ENCODE measurements at regions of chr10 and their contacts with region 1.

Region 1: DNA sequence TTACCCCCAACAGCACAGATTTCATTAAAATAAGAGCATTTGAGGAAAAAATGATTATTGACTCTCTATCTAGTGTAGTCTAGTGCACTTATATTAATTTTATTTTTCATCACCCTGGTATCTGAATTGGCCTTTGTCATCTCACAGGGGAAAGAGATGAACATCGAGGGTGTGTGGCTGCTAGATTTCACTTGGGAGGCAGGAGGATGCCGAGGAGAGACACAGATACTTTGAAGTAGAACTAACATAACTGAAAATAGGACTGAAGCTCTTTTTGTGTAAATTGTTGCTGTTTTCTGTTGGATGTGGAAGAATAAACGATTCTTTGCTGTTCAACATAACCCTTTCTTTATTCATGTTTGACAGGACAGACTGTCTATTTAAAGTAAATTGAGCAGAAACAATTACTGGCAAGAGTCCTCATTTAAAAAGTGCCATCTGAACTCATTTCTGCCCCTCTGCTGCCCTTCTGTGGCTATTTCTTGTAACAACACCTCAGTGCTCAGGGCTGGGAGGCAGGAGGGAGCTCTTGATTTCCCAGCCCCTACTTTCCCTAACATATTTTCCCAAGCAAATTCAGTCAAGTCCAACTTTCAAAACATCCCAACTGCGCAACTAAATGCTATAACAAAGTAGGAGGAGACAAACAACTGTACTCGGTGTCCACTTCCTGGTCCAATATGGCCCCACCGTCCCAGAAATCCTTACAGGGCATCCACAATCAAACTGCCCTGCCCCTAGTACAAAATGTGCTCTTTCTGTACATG is 15.6 kb downstream of the LYZL1 start:
- H3K4me3 ChIP-seq: no peak overlapping the region
- H3K27ac ChIP-seq: no peak overlapping the region; the same call in 1 of the 2 replicates
- H3K4me1 ChIP-seq: no peaks in the 10 kb centered on the region; the same call in 1 of the 2 replicates
- CTCF ChIP-seq: peak; percentile 82

Region 2: DNA sequence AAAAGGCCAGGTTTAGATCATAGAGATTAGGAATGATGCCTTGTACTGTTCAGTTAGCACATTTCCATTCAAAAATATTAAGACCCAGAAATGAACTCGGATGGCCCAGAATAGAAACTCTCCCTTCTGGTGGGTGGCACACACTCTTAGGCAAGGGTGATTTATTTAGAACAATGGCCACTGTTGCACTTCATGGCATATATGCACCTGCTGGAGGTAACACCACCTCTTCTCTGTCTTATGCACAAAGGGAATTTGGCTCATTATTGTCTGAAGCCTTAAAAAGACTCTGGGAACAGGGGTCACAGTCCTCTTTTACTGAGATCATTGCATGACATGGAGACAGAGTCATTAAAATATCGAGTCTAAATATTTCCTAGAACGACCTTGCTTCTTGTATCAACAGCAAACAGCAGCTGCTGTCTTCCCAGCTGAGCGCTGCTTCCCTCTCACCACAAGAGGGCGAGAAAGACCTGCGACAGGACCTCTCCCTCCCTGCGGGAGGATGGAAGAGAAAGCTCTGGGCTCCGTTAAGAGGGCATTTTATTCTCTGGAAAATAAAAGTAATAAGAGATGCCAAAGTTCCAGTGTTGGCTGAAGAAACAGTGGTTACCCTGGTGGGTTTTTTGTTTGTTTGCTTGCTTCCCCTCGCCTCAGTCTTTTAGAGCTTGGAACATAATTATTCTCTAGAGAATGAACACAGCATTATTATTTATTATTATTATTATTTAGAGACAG is 640.7 kb before region 1 on chr10:
- CTCF ChIA-PET with region 1: interaction called, 20 read pairs
- POLR2A ChIA-PET with region 1: no interaction called
- H3K4me3 ChIP-seq: no peak overlapping the region
- H3K27ac ChIP-seq: no peak overlapping the region
- H3K4me1 ChIP-seq: 0 out of 2 replicates have a peak, but pooled peaks cover 6% of the 10 kb centered on the region
- CTCF ChIP-seq: peak; percentile 84

Region 3: DNA sequence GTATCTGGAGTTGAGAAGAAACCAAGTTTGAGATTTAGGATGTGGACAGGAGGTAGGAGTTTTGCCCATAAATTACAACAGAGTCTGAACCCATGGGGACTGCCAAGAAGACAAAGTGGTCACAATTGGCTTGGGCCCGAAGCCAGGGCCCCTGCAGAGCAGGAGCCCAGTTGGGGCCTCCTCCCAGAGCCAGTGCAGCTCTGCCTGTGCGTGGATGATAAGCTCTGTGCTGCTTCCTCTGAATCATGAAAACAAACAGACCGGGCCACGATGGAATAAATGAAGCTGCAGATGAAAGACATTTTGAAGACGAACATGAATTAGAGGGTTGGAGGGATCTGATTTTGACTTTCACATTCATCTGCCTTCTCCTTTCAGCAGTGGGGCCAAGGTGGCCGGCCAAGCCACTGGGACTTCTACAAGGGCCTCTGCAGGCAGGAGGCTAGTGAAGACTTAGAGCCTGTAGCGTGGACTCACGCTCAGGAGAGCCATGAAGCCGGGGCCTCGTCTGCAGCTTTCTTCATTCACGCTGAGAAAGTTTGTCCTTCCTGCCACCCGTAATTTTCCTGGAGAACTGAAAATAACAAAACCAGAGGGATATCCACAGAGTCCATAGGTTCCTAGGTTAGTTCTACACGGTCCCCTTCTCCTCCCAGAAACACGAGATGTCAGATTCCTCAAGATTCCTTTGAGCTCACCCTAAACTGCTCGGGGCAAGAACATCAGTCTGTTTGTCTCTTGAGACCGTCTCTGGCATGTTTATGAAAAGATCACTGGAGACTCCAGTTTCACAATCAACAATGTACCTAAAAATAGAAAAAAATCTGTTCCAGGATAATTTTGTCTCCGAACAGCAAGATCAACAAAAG is 172.3 kb before region 1 on chr10:
- CTCF ChIA-PET with region 1: interaction called, 15 read pairs
- POLR2A ChIA-PET with region 1: no interaction called
- H3K4me3 ChIP-seq: no peak overlapping the region
- H3K27ac ChIP-seq: peak overlapping the region; percentile 61
- H3K4me1 ChIP-seq: peaks cover 7% of the 10 kb centered on the region; the same call in 1 of the 2 replicates
- CTCF ChIP-seq: no peak

Region 4: GRCh38 chr10:29249018-29249417 is 55.4 kb before region 1 on chr10:
- CTCF ChIA-PET with region 1: interaction called, 13 read pairs
- POLR2A ChIA-PET with region 1: no interaction called
- H3K4me3 ChIP-seq: no peak overlapping the region
- H3K27ac ChIP-seq: no peak overlapping the region
- H3K4me1 ChIP-seq: peaks cover 11% of the 10 kb centered on the region
- CTCF ChIP-seq: no peak

Region 5: DNA sequence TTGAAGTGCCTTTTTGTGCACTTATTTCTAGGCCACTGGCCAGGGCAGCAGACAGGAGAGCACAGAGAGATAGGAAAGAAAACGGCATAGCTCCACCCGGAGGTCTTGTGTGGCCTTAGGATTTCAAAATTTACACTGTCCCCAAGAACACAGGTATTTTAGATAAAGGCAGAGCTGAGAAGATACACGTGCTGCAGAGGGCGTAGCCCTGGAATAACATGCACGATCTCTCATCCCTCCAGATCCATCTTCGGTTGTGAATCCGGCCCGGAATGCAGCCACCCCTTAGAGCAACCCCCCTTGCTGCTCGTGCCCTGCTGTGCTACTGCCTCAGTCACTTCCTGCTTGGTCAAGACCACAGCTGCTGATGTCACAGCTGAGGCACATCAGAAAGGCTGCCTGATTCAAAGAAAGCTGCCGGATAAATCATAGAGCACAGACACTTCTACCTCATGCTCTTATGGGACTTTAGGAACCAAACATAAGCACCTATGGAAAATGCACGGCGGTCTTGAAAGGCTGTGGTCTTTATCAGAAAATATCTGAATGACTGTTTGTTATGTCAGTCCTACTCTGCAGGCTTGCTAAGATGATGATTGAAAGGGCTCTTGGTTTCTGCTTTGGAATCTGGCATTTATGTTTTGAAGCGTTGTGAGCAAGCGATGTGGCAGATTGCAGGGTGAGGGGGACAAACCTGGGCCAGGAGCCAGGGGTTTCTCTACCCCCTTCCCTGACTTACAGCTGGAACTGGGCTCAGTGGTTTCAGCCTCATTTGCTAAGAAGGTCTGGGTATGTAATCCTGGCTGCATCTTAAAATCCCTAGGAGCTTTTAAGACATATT is 178.4 kb after region 1 on chr10:
- CTCF ChIA-PET with region 1: no interaction called
- POLR2A ChIA-PET with region 1: no interaction called
- H3K4me3 ChIP-seq: no peak overlapping the region
- H3K27ac ChIP-seq: no peak overlapping the region
- H3K4me1 ChIP-seq: no peaks in the 10 kb centered on the region
- CTCF ChIP-seq: no peak